HCT116 (cell line): ENCODE measurements at regions of chr12 and their contacts with region 1.

Region 1: GRCh38 chr12:125065021-125065795 is at the start of gene AACS:
- DNase-seq: peak; percentile 45
- ATAC-seq: peak; percentile 94
- H3K4me3 ChIP-seq: peak within 1 kb of the TSS; percentile 67 to 74
- H3K27ac ChIP-seq: peak within 1 kb of the TSS; percentile 47; the same call in 1 of the 2 replicates
- H3K4me1 ChIP-seq: peaks cover 0 to 12% of the 10 kb centered on the region in 2 experiments; a peak in 3 of 4 replicates
- H3K27me3 ChIP-seq: no peaks in the 10 kb centered on the region
- CTCF ChIP-seq: no peak
- POLR2A ChIP-seq: peak; percentile 0
- RAD21 ChIP-seq: no peak
- total RNA-seq, gene AACS: 16.0 TPM

Region 2: DNA sequence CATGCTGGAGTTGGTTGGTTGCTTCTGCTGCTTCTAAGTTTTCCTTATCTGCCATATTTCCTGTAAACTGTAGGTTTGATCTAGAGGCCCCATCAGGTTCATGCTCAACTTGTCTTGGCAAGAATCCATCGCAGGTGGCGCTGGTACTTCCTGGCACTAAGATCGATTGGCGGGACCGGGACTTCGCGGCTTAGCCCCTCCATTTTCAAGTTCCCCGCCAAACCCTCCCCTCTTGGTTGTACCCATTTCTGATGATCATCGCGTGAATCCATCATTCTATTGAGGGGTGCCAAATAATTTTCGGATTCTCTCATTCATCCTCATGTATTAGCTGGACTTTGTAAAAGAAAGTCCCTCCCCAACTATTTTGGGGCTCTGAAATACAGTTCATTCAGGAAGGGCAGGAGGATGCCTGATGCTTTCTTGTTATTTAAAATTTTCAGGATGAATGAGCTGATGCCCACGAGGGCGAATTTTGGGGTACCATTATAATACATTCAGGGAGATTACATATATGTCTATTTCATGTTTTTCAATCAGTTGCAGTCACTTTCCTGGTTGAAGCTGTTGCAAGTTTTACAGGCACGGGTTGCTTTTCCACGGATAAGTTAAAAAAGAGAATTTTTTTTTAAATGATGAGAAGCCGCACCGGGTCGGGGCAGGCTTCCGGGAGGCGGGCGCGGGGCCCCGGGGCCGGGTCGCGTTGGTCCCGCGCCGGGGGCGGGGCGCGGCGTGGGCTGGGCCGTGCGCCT is 72.2 kb before region 1 on chr12:
- CTCF ChIA-PET with region 1: no interaction called
- POLR2A ChIA-PET with region 1: no interaction called
- RAD21 ChIA-PET with region 1: no interaction called
- intact Hi-C with region 1: loop called (anchors 5 kb)
- DNase-seq: peak; percentile 91
- ATAC-seq: peak; percentile 50
- H3K4me3 ChIP-seq: peak overlapping the region; percentile 42 to 61
- H3K27ac ChIP-seq: peak overlapping the region; percentile 74
- H3K4me1 ChIP-seq: peaks cover 10 to 34% of the 10 kb centered on the region in 2 experiments; a peak in 3 of 4 replicates
- H3K27me3 ChIP-seq: no peaks in the 10 kb centered on the region
- CTCF ChIP-seq: peak in 2 of 3 experiments; percentile 54 to 56; a peak in 4 of 6 replicates
- POLR2A ChIP-seq: no peak
- RAD21 ChIP-seq: no peak

Region 3: GRCh38 chr12:125006206-125006764 is 58.9 kb before region 1 on chr12:
- CTCF ChIA-PET with region 1: no interaction called
- POLR2A ChIA-PET with region 1: no interaction called
- RAD21 ChIA-PET with region 1: no interaction called
- intact Hi-C with region 1: no loop called
- DNase-seq: no peak
- ATAC-seq: no peak
- H3K4me3 ChIP-seq: no peak overlapping the region
- H3K27ac ChIP-seq: no peak overlapping the region
- H3K4me1 ChIP-seq: no peaks in the 10 kb centered on the region
- H3K27me3 ChIP-seq: no peaks in the 10 kb centered on the region
- CTCF ChIP-seq: no peak
- POLR2A ChIP-seq: no peak
- RAD21 ChIP-seq: no peak

Region 4: DNA sequence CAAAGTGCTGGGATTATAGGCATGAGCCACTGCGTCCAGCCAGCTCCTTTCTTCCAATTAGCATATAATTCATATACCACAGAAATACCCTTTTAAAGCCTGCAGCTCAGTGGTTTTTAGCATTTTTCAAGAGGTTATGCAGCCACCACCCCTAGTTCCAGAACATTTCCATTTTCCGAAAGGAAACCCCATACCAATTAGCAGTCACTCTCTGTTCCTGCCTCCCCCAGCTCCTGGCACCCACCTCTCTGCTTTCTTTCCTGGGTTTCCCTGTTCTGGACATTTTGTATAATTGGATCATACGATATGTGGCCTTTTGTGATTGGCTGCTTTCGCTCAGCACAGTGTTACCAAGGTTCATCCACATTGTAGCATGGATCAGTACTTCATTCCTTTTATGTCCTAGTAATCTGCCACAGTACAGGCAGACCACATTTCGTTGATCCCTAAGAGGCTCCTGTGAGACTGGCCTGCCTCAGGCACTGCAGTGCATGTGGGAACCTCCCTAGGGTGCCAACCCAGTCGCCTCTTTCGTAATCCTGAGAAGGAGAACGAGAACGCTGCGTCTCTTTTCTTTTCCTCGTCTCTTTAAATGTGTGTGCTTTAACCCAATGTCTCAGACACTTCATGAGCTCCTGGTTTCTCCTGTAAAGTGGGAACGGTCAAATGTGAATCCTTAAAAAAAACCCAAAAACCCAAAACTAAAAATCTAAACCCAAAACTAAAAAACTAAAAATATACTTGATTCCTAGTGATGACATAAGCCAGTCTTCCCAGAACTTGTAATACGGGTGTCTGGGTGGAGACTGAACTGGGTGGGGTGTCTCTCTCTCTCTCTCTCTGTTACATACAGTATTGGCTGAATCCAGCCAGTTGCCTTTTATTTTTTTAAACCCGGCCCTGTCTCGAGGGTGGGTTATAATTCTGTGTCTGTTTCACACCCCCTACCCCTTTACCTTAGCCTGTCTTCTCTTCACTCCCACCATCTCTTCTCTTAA is 14.7 kb after region 1 on chr12:
- CTCF ChIA-PET with region 1: no interaction called
- POLR2A ChIA-PET with region 1: no interaction called
- RAD21 ChIA-PET with region 1: no interaction called
- intact Hi-C with region 1: no loop called
- DNase-seq: no peak
- ATAC-seq: no peak
- H3K4me3 ChIP-seq: no peak overlapping the region
- H3K27ac ChIP-seq: no peak overlapping the region
- H3K4me1 ChIP-seq: no peaks in the 10 kb centered on the region
- H3K27me3 ChIP-seq: no peaks in the 10 kb centered on the region
- CTCF ChIP-seq: no peak
- POLR2A ChIP-seq: no peak
- RAD21 ChIP-seq: no peak